CD8-positive, alpha-beta T cell (primary cell): ENCODE measurements at regions of chr3 and their contacts with region 1.

Region 1: DNA sequence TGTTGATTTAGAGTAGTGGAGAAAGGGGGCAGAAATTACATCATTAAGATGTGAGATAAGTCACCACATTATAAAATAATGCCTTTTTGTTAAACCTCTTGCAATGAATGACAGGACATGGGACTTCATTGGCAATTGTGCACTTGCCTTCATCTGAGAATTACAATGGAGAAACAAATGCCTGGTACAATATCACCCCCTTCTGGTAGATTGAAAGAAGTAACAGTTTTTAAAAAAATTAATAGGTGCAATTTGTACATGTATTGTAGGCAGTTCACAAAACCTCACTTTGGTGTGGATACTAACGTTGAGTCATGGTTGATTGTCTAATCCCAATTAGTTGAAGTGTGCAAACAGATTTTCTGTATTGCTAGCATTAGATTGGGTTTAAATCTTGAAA is 4.6 kb upstream of the P2RY14 start:
- DNase-seq: peak in 2 of 9 experiments; percentile 73 to 79
- ATAC-seq: peak; percentile 56
- H3K4me3 ChIP-seq: no peak overlapping the region
- H3K4me3 Mint-ChIP-seq: no peak overlapping the region
- H3K27ac ChIP-seq: no peak overlapping the region
- H3K27ac Mint-ChIP-seq: no peak overlapping the region
- H3K4me1 ChIP-seq: peaks cover 10% of the 10 kb centered on the region
- H3K4me1 Mint-ChIP-seq: peaks cover 18% of the 10 kb centered on the region
- H3K27me3 ChIP-seq: no peaks in the 10 kb centered on the region
- H3K27me3 Mint-ChIP-seq: no peaks in the 10 kb centered on the region
- CTCF ChIP-seq: peak; percentile 90

Region 2: DNA sequence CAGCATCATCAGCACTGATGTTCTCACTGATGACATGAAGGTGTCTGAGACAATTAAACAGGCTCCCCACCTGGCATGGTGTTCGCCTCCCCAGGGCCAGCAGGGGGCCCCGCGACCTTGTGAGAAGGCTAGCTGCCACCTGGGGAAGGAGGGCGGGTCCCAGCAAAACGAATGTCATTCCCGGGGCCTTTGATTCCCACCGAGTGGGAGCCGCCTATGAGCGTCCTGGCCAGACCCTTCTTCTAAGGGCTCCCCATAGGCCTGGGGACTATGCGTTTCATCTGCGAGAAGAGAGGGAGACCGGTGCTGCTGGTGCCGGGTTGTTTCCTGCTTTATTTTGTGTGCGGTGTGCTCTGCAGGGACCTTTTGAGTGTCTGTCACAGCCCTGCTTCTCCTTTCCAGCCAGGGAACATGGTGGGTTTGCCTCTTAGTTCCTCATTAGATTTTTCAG is 357.1 kb before region 1 on chr3:
- CTCF ChIA-PET with region 1: no interaction called
- POLR2A ChIA-PET with region 1: no interaction called
- intact Hi-C with region 1: loop called (anchors 2 to 10 kb)
- DNase-seq: peak; percentile 8 to 63 (median 51)
- ATAC-seq: peak; percentile 81
- H3K4me3 ChIP-seq: no peak overlapping the region
- H3K4me3 Mint-ChIP-seq: peak overlapping the region; percentile 55
- H3K27ac ChIP-seq: no peak overlapping the region
- H3K27ac Mint-ChIP-seq: no peak overlapping the region
- H3K4me1 ChIP-seq: no peaks in the 10 kb centered on the region
- H3K4me1 Mint-ChIP-seq: peaks cover 6% of the 10 kb centered on the region
- H3K27me3 ChIP-seq: no peaks in the 10 kb centered on the region
- H3K27me3 Mint-ChIP-seq: peaks cover 14% of the 10 kb centered on the region
- CTCF ChIP-seq: peak; percentile 60

Region 3: GRCh38 chr3:151203051-151203420 is 79.9 kb before region 1 on chr3 and contains the start of gene GPR171:
- CTCF ChIA-PET with region 1: interaction called, 13 read pairs
- POLR2A ChIA-PET with region 1: interaction called, 4 read pairs
- intact Hi-C with region 1: no loop called
- DNase-seq: peak; percentile 46 to 91 (median 68)
- ATAC-seq: peak; percentile 84
- H3K4me3 ChIP-seq: peak within 1 kb of the TSS; percentile 50 to 59
- H3K4me3 Mint-ChIP-seq: peak within 1 kb of the TSS; percentile 76
- H3K27ac ChIP-seq: peak within 1 kb of the TSS; percentile 36 to 72
- H3K27ac Mint-ChIP-seq: peak within 1 kb of the TSS; percentile 91
- H3K4me1 ChIP-seq: peaks cover 67% of the 10 kb centered on the region
- H3K4me1 Mint-ChIP-seq: peaks cover 81% of the 10 kb centered on the region
- H3K27me3 ChIP-seq: no peaks in the 10 kb centered on the region
- H3K27me3 Mint-ChIP-seq: no peaks in the 10 kb centered on the region
- CTCF ChIP-seq: no peak
- total RNA-seq, gene GPR171: 11.5 to 13.4 TPM

Region 4: DNA sequence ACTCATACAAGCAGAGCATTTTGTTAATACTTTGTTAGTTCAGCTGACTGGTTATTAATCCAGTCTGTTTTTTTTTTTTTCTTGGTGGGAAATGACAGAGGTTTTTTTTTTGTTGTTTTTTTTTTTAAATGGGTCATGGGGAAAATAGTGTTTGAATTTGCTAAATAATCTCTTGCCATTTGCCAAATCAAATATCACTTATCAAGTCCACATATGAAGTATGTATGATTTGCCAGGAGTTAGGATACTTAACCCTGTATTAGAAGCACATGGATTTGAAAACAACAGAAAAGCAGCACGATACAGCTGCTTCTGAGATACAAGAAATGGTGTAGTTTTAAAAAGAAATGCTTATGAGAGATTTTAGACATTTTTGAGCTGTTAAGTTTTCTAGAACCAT is 26.2 kb before region 1 on chr3:
- CTCF ChIA-PET with region 1: interaction called, 13 read pairs
- POLR2A ChIA-PET with region 1: interaction called, 3 read pairs
- intact Hi-C with region 1: no loop called
- DNase-seq: no peak
- ATAC-seq: no peak
- H3K4me3 ChIP-seq: no peak overlapping the region
- H3K4me3 Mint-ChIP-seq: no peak overlapping the region
- H3K27ac ChIP-seq: no peak overlapping the region
- H3K27ac Mint-ChIP-seq: no peak overlapping the region
- H3K4me1 ChIP-seq: no peaks in the 10 kb centered on the region
- H3K4me1 Mint-ChIP-seq: no peaks in the 10 kb centered on the region
- H3K27me3 ChIP-seq: no peaks in the 10 kb centered on the region
- H3K27me3 Mint-ChIP-seq: peaks cover 4% of the 10 kb centered on the region
- CTCF ChIP-seq: no peak

Region 5: DNA sequence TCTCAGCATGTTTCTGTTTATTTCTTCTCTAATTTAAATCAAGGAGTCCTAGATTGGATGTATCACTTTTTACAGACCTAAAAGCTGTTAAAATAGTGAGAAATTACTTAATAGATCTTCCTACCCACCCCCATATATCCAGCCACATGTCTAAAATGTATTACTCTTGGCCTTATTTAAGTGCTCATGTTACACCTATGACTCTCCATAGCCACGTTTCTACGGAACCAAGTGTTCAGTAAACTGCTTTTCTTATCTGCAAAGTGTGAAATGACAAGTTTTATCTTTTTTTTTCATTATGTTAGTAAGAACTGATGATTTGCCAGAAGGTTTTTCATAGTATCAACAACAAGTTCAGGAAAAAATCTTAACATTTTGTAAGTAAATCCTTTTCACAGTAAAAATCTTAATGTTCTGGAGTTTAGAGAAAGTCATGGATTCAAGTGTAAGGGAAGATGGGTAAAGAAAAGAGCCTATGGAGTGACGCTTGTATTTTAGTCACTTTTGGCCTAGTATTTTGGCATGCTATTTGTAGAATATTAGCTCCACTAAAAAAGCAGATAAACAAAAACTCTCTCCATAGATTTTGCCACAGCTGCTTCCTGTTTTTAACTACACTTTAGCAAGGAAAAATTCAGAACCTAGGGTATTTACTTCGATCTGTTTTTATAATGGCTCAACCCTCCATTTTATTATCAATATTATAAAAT is 219.2 kb after region 1 on chr3:
- CTCF ChIA-PET with region 1: no interaction called
- POLR2A ChIA-PET with region 1: no interaction called
- intact Hi-C with region 1: no loop called
- DNase-seq: no peak
- ATAC-seq: no peak
- H3K4me3 ChIP-seq: no peak overlapping the region
- H3K4me3 Mint-ChIP-seq: no peak overlapping the region
- H3K27ac ChIP-seq: no peak overlapping the region
- H3K27ac Mint-ChIP-seq: no peak overlapping the region
- H3K4me1 ChIP-seq: no peaks in the 10 kb centered on the region
- H3K4me1 Mint-ChIP-seq: no peaks in the 10 kb centered on the region
- H3K27me3 ChIP-seq: no peaks in the 10 kb centered on the region
- H3K27me3 Mint-ChIP-seq: no peaks in the 10 kb centered on the region
- CTCF ChIP-seq: no peak

Region 6: DNA sequence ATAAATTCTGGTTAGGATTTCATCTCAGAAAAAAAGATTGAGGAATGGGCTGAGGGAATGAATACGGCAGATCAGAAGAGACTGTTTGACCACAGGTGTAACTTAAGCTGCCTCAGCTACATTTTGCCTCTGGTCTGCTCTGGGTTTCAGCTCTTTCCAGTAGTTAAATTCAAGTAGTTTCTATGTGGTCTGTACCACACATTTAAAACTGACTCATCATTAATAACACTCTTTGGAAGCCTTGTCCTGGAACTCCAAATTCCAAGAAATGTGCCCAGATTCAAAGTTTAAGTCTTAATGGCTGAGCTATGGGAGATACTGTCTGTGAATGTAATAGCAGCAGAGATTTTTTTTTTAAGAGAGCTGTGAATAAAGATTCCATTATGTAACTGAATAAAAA is 311.0 kb after region 1 on chr3:
- CTCF ChIA-PET with region 1: no interaction called
- POLR2A ChIA-PET with region 1: no interaction called
- intact Hi-C with region 1: no loop called
- DNase-seq: no peak
- ATAC-seq: no peak
- H3K4me3 ChIP-seq: no peak overlapping the region
- H3K4me3 Mint-ChIP-seq: no peak overlapping the region
- H3K27ac ChIP-seq: no peak overlapping the region
- H3K27ac Mint-ChIP-seq: no peak overlapping the region
- H3K4me1 ChIP-seq: no peaks in the 10 kb centered on the region
- H3K4me1 Mint-ChIP-seq: no peaks in the 10 kb centered on the region
- H3K27me3 ChIP-seq: no peaks in the 10 kb centered on the region
- H3K27me3 Mint-ChIP-seq: peaks cover 2% of the 10 kb centered on the region
- CTCF ChIP-seq: no peak

Region 7: DNA sequence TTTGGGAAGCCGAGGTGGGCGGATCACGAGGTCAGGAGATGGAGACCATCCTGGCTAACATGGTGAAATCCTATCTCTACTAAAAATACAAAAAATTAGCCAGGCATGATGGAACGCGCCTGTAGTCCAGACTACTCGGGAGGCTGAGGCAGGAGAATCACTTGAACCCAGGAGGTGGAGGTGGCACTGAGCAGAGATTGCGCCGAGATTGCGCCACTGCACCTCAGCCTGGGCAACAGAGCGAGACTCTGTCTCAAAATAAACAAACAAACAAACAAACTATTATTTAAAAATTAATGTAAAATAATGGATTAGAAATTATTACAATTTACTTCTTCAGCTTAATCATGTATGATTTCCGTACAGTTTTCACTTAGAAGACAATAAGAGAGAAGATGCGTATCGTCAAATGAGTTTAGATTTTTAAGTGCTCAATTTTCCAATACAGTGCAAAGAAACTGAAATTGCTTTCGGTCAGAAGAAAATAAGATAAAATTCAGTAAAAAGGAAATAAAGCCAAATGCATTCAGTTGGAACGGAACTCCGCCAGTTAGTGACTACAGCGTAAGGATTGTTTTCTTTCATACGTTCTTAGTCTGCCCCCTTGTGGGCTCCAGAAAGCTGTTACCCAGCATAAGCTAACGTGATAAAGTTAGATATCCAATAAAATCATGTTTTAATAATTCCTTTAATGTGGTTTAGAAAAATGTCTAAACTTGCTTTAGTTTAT is 555.8 kb after region 1 on chr3:
- CTCF ChIA-PET with region 1: no interaction called
- POLR2A ChIA-PET with region 1: no interaction called
- intact Hi-C with region 1: loop called in 1 of 2 experiments (anchors 5 kb)
- DNase-seq: peak in 5 of 9 experiments; percentile 2 to 63 (median 30)
- ATAC-seq: peak; percentile 49
- H3K4me3 ChIP-seq: no peak overlapping the region
- H3K4me3 Mint-ChIP-seq: no peak overlapping the region
- H3K27ac ChIP-seq: no peak overlapping the region
- H3K27ac Mint-ChIP-seq: no peak overlapping the region
- H3K4me1 ChIP-seq: no peaks in the 10 kb centered on the region
- H3K4me1 Mint-ChIP-seq: no peaks in the 10 kb centered on the region
- H3K27me3 ChIP-seq: peaks cover 0 to 2% of the 10 kb centered on the region in 2 experiments
- H3K27me3 Mint-ChIP-seq: peaks cover 9% of the 10 kb centered on the region
- CTCF ChIP-seq: peak; percentile 59